Activated T-helper 1 cell treated with anti-CD3 and anti-CD28 coated beads, Interleukin-12 subunit alpha, Interleukin-12 subunit beta, Interleukin-2, Interleukin-4 antibody, amounts not matched to agents 30 ng/mL and 10 ng/mL and 1 ng/mL, durations not matched to agents 14 hours and 24 hours and 36 hours (primary cell): ENCODE measurements at regions of chr19 and their contacts with region 1.

Region 1: GRCh38 chr19:4400135-4400936 is at the start of gene SH3GL1:
- DNase-seq: peak; percentile 88
- H3K4me3 Mint-ChIP-seq: peak within 1 kb of the TSS; percentile 96
- H3K27ac Mint-ChIP-seq: peak within 1 kb of the TSS; percentile 94
- H3K4me1 Mint-ChIP-seq: peaks cover 71% of the 10 kb centered on the region
- H3K27me3 Mint-ChIP-seq: peaks cover 3% of the 10 kb centered on the region
- total RNA-seq, gene SH3GL1: 50.3 and 54.2 TPM in 2 replicates

Region 2: DNA sequence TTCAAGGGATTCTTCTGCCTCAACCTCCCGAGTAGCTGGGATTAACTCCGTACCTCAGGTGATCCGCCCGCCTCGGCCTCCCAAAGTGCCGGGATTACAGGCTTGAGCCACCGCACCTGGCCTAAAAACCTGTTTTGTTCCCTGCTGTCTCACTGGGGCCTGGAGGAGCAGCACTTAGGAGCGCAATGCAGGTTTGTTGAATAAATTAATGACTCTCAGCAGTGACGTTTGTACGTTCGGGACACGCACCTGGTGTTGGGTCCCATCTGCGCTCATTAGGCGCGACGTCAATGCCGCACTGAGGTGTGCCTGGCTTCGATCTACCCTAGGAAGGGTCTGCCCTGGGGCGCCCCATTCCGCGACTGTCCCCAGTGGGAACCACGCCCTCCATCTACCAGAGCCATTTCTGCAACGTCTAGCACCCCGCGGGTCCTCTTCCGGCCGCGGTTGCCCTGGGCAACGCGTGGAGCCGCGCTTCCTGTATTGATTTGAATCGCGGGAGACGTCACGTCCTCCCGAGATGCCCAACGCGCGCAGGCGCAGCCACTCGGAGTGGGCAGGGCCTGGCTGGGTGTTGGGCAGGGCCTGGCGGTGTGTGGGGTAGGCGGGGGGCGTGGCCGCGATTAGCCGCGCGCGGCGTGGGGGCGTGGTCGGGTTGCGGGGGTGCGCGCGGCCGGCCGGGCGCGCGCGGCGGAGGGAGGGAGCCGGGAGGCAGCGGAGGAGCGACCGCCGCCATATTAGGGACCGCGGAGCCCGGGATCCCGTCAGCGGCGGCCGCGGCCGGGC is 894.5 kb before region 1 on chr19 and contains the start of gene FZR1:
- intact Hi-C with region 1: loop called (anchors 2 kb)
- DNase-seq: peak; percentile 100
- H3K4me3 Mint-ChIP-seq: peak within 1 kb of the TSS; percentile 93
- H3K27ac Mint-ChIP-seq: peak within 1 kb of the TSS; percentile 97
- H3K4me1 Mint-ChIP-seq: peaks cover 43% of the 10 kb centered on the region
- H3K27me3 Mint-ChIP-seq: no peaks in the 10 kb centered on the region
- total RNA-seq, gene FZR1: 41.1 and 45.3 TPM in 2 replicates

Region 3: GRCh38 chr19:4246767-4247593 is 153.4 kb before region 1 on chr19 and contains the start of gene YJU2:
- intact Hi-C with region 1: loop called (anchors 1 kb)
- DNase-seq: peak; percentile 99
- H3K4me3 Mint-ChIP-seq: peak within 1 kb of the TSS; percentile 96
- H3K27ac Mint-ChIP-seq: peak within 1 kb of the TSS; percentile 100
- H3K4me1 Mint-ChIP-seq: peaks cover 11% of the 10 kb centered on the region
- H3K27me3 Mint-ChIP-seq: no peaks in the 10 kb centered on the region
- total RNA-seq, gene YJU2: 36.8 and 40.6 TPM in 2 replicates

Region 4: DNA sequence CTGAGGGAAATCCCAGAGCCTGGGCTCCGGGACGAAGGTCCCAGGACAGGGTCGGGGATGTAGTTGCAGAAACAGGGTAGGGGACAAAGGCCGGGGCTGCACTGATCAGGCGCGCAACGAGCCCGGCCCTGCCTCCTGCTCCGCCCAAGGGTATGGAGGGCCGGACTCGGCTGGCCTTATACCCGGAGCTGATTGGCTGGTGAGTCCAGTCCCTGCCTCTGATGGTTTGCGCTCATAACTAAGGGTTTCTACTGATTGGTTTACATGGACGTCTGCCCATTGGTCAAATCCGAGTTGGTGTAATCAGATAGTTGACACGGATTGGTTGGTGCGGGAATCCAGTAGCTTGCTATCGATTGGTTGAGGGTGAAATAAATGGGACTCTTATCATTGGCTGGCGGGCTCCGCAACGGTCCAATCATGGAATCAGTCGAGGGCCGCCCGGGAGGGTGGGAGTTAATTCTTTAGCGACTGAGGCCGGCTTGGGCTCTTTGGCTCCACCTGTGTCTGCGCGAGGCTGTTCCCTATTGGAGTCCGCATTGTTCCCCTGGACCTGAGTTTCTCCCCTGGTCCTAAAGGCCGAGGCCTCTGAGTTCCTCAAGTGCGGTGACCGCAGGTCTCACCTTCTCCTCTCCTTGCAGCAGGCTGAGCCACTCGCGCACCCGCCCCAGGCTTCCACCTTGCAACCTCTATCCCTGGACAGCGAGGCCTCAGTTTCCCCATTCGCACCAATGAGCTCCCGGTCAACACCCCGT is 57.5 kb before region 1 on chr19:
- intact Hi-C with region 1: loop called (anchors 1 kb)
- DNase-seq: peak; percentile 92
- H3K4me3 Mint-ChIP-seq: peak overlapping the region; percentile 91
- H3K27ac Mint-ChIP-seq: peak overlapping the region; percentile 90
- H3K4me1 Mint-ChIP-seq: peaks cover 18% of the 10 kb centered on the region
- H3K27me3 Mint-ChIP-seq: no peaks in the 10 kb centered on the region

Region 5: GRCh38 chr19:4457654-4458395 is 57.5 kb after region 1 on chr19 and contains the start of gene UBXN6:
- intact Hi-C with region 1: loop called (anchors 1 kb)
- DNase-seq: peak; percentile 98
- H3K4me3 Mint-ChIP-seq: peak within 1 kb of the TSS; percentile 92
- H3K27ac Mint-ChIP-seq: peak within 1 kb of the TSS; percentile 94
- H3K4me1 Mint-ChIP-seq: peaks cover 11% of the 10 kb centered on the region
- H3K27me3 Mint-ChIP-seq: peaks cover 2% of the 10 kb centered on the region
- total RNA-seq, gene UBXN6: 49.5 and 51.0 TPM in 2 replicates

Region 6: DNA sequence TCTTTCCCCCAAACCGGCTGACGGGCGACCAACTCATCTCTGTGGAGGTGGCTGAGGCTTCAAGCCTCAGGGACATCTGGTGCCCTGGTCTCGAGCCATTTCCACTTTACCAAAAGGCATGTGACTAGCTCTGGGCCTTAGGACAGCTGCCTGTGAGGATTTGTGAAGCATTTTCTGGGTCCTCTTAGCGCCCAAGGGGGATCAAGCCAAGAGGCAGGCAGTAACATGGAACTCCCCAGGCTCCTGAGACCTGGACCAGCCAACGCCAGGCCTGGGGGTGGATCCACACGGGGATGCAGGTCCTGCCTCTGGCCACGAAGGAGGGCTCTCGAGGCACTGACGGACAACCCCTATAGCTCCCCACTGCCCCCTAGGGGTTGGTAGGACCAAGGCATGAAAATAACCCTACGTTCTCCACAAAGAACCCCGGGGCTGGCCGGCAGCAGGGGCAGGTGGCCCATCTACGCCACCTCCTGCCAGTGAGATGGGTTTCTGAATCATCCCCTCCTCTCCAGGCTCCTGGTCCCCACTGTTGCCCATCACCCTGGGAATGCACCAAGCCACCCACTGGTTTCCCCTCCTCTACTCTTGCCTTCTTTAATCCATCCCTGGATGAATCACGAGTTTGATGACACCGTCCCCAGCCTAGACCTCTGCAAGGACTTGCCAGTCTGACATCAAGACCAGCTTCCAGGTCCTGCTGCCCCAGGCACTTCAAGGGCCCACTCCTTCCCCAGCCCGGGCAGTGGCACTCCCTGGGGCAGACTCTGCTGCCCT is 276.8 kb after region 1 on chr19:
- intact Hi-C with region 1: no loop called
- DNase-seq: no peak
- H3K4me3 Mint-ChIP-seq: no peak overlapping the region
- H3K27ac Mint-ChIP-seq: no peak overlapping the region
- H3K4me1 Mint-ChIP-seq: no peaks in the 10 kb centered on the region
- H3K27me3 Mint-ChIP-seq: no peaks in the 10 kb centered on the region